Sigmoid colon (tissue), 7 donors: ENCODE measurements at regions of chrX and their contacts with region 1.

Region 1: GRCh38 chrX:24498975-24499374 is 33.9 kb downstream of the PDK3 start:
- DNase-seq: no peak
- H3K4me3 ChIP-seq: no peak overlapping the region
- H3K27ac ChIP-seq: peak overlapping the region; percentile 34 to 65 (median 60)
- H3K4me1 ChIP-seq: peaks cover 0 to 30% (median 13%) of the 10 kb centered on the region in 4 donors
- H3K27me3 ChIP-seq: no peaks in the 10 kb centered on the region
- CTCF ChIP-seq: peak in 3 of 4 experiments; percentile 33 to 53 (median 44)
- EP300 ChIP-seq: no peak
- POLR2A ChIP-seq: no peak

Region 2: GRCh38 chrX:24204331-24204730 is 294.6 kb before region 1 on chrX:
- intact Hi-C with region 1: no loop called
- DNase-seq: no peak
- H3K4me3 ChIP-seq: no peak overlapping the region
- H3K27ac ChIP-seq: no peak overlapping the region
- H3K4me1 ChIP-seq: peaks cover 0 to 32% (median 11%) of the 10 kb centered on the region in 4 donors
- H3K27me3 ChIP-seq: no peaks in the 10 kb centered on the region
- CTCF ChIP-seq: no peak
- EP300 ChIP-seq: no peak
- POLR2A ChIP-seq: no peak

Region 3: GRCh38 chrX:24259544-24260240 is 239.3 kb before region 1 on chrX:
- intact Hi-C with region 1: loop called (anchors 5 kb)
- DNase-seq: peak; percentile 74
- H3K4me3 ChIP-seq: no peak overlapping the region
- H3K27ac ChIP-seq: peak overlapping the region in 3 of 4 donors; percentile 3 to 63 (median 60)
- H3K4me1 ChIP-seq: peaks cover 0 to 12% (median 5%) of the 10 kb centered on the region in 4 donors
- H3K27me3 ChIP-seq: no peaks in the 10 kb centered on the region
- CTCF ChIP-seq: peak; percentile 26 to 48 (median 32)
- EP300 ChIP-seq: no peak
- POLR2A ChIP-seq: no peak

Region 4: GRCh38 chrX:24395775-24396174 is 103.2 kb before region 1 on chrX:
- intact Hi-C with region 1: loop called (anchors 1 kb)
- DNase-seq: no peak
- H3K4me3 ChIP-seq: no peak overlapping the region
- H3K27ac ChIP-seq: peak overlapping the region; percentile 68 to 78 (median 72)
- H3K4me1 ChIP-seq: peaks cover 0 to 26% (median 8%) of the 10 kb centered on the region in 4 donors
- H3K27me3 ChIP-seq: no peaks in the 10 kb centered on the region
- CTCF ChIP-seq: peak; percentile 56 to 76 (median 73)
- EP300 ChIP-seq: no peak
- POLR2A ChIP-seq: no peak

Region 5: DNA sequence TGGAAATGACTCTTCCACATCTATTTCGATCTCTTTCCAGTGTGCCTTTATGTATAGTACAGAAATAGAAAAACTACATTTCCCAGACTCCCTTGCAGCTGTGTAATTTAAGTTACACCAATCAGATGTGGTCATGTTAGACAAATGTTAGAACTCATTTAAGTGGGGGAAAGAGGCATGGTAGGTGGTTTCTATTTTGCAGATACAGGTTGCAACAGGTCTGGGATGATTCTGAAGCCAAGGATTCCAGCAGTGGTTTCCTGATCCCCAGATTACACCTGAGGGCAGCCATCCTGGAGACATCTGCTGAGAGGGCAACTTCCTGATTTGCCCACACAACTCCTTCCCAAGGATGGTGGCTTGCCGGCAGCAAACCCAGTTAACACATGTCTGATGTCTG is 72.6 kb before region 1 on chrX:
- intact Hi-C with region 1: loop called (anchors 2 kb)
- DNase-seq: no peak
- H3K4me3 ChIP-seq: no peak overlapping the region
- H3K27ac ChIP-seq: peak overlapping the region; percentile 53 to 85 (median 77)
- H3K4me1 ChIP-seq: peaks cover 0 to 43% (median 22%) of the 10 kb centered on the region in 4 donors
- H3K27me3 ChIP-seq: no peaks in the 10 kb centered on the region
- CTCF ChIP-seq: no peak
- EP300 ChIP-seq: no peak
- POLR2A ChIP-seq: no peak

Region 6: GRCh38 chrX:24464836-24465531 is 34.0 kb before region 1 on chrX and contains the start of gene PDK3:
- intact Hi-C with region 1: no loop called
- DNase-seq: peak; percentile 96
- H3K4me3 ChIP-seq: peak within 1 kb of the TSS; percentile 54 to 75 (median 72)
- H3K27ac ChIP-seq: peak within 1 kb of the TSS; percentile 79 to 89 (median 86)
- H3K4me1 ChIP-seq: peaks cover 0 to 21% (median 0%) of the 10 kb centered on the region in 4 donors
- H3K27me3 ChIP-seq: no peaks in the 10 kb centered on the region
- CTCF ChIP-seq: no peak
- EP300 ChIP-seq: peak in 1 of 4 donors; percentile 55
- POLR2A ChIP-seq: peak; percentile 36 to 40
- total RNA-seq, gene PDK3: 47.6 to 63.2 (median 59.0) TPM